ENCODE measurements at regions of chr3 and their contacts with region 1.

Region 1: GRCh38 chr3:187738331-187739093 is 6.8 kb downstream of the BCL6 start:
- DNase-seq: peak; percentile 94
- H3K4me3 Mint-ChIP-seq: peak overlapping the region; percentile 83
- H3K27ac Mint-ChIP-seq: peak overlapping the region; percentile 59
- H3K4me1 Mint-ChIP-seq: peaks cover 42% of the 10 kb centered on the region
- H3K27me3 Mint-ChIP-seq: peaks cover 9% of the 10 kb centered on the region
- CTCF ChIP-seq: peak; percentile 96

Region 2: GRCh38 chr3:186909078-186909853 is 829.2 kb before region 1 on chr3:
- CTCF ChIA-PET with region 1: no interaction called
- intact Hi-C with region 1: no loop called
- DNase-seq: peak; percentile 24
- H3K4me3 Mint-ChIP-seq: no peak overlapping the region
- H3K27ac Mint-ChIP-seq: no peak overlapping the region
- H3K4me1 Mint-ChIP-seq: no peaks in the 10 kb centered on the region
- H3K27me3 Mint-ChIP-seq: peaks cover 60% of the 10 kb centered on the region
- CTCF ChIP-seq: no peak

Region 3: DNA sequence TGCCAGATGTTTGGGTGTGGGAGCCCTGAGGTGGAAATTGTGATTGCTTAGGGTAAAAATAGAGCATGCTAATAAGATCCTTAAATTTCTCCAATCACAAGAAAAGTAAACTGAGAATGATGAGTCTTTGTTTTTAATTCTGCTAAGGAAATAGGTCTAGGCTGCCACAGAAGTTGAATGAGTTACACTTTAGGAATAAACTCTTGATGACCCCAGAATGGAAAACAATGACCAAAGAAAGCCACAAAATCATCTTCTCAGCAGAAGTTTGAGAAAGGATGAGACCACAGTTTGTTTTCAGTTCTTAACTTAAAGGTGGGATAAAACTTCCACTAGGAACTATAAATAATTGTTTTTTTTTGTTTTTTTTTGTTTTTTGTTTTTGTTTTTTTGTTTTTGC is 171.4 kb after region 1 on chr3:
- CTCF ChIA-PET with region 1: no interaction called
- intact Hi-C with region 1: no loop called
- DNase-seq: no peak
- H3K4me3 Mint-ChIP-seq: no peak overlapping the region
- H3K27ac Mint-ChIP-seq: no peak overlapping the region
- H3K4me1 Mint-ChIP-seq: peaks cover 26% of the 10 kb centered on the region
- H3K27me3 Mint-ChIP-seq: no peaks in the 10 kb centered on the region
- CTCF ChIP-seq: no peak

Region 4: GRCh38 chr3:188154014-188154808 is 415.7 kb after region 1 on chr3 and contains the start of gene LPP:
- CTCF ChIA-PET with region 1: interaction called, 6 read pairs
- intact Hi-C with region 1: loop called (anchors 1 kb)
- DNase-seq: peak; percentile 97
- H3K4me3 Mint-ChIP-seq: peak within 1 kb of the TSS; percentile 72
- H3K27ac Mint-ChIP-seq: peak within 1 kb of the TSS; percentile 86
- H3K4me1 Mint-ChIP-seq: peaks cover 56% of the 10 kb centered on the region
- H3K27me3 Mint-ChIP-seq: no peaks in the 10 kb centered on the region
- CTCF ChIP-seq: peak; percentile 21
- total RNA-seq, gene LPP: 219 and 264 TPM in 2 replicates

Region 5: GRCh38 chr3:188270423-188270972 is 532.0 kb after region 1 on chr3:
- CTCF ChIA-PET with region 1: interaction called, 6 read pairs
- intact Hi-C with region 1: loop called (anchors 2 kb)
- DNase-seq: peak; percentile 80
- H3K4me3 Mint-ChIP-seq: peak overlapping the region; percentile 24
- H3K27ac Mint-ChIP-seq: peak overlapping the region; percentile 88
- H3K4me1 Mint-ChIP-seq: peaks cover 55% of the 10 kb centered on the region
- H3K27me3 Mint-ChIP-seq: no peaks in the 10 kb centered on the region
- CTCF ChIP-seq: no peak

Region 6: DNA sequence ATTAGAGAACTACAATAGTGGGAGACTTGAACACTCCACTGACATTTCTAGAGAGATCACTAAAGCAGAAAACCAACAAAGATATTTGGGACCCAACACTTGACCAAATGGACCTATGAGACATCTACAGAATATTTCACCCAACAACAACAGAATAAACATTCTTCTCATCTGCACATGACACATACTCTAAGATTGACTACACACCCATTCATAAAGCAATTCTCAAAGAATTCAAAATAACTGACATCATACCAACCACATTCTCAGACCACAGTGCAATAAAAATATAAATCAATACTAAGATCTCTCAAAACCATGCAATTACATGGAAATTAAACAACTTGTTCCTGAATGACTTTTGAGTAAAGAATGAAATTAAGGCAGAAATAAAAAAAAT is 889.1 kb after region 1 on chr3:
- CTCF ChIA-PET with region 1: interaction called, 3 read pairs
- intact Hi-C with region 1: loop called (anchors 5 kb)
- DNase-seq: no peak
- H3K4me3 Mint-ChIP-seq: no peak overlapping the region
- H3K27ac Mint-ChIP-seq: peak overlapping the region; percentile 12
- H3K4me1 Mint-ChIP-seq: peaks cover 47% of the 10 kb centered on the region
- H3K27me3 Mint-ChIP-seq: no peaks in the 10 kb centered on the region
- CTCF ChIP-seq: no peak

Region 7: GRCh38 chr3:188830893-188831292 is 1092.4 kb after region 1 on chr3:
- CTCF ChIA-PET with region 1: no interaction called
- intact Hi-C with region 1: loop called (anchors 5 kb)
- DNase-seq: peak; percentile 10
- H3K4me3 Mint-ChIP-seq: no peak overlapping the region
- H3K27ac Mint-ChIP-seq: no peak overlapping the region
- H3K4me1 Mint-ChIP-seq: no peaks in the 10 kb centered on the region
- H3K27me3 Mint-ChIP-seq: no peaks in the 10 kb centered on the region
- CTCF ChIP-seq: peak; percentile 40

Region 8: GRCh38 chr3:188954590-188955208 is 1216.2 kb after region 1 on chr3:
- CTCF ChIA-PET with region 1: interaction called, 171 read pairs
- intact Hi-C with region 1: loop called (anchors 1 kb)
- DNase-seq: peak; percentile 94
- H3K4me3 Mint-ChIP-seq: no peak overlapping the region
- H3K27ac Mint-ChIP-seq: no peak overlapping the region
- H3K4me1 Mint-ChIP-seq: peaks cover 24% of the 10 kb centered on the region
- H3K27me3 Mint-ChIP-seq: no peaks in the 10 kb centered on the region
- CTCF ChIP-seq: peak; percentile 98

Region 9: DNA sequence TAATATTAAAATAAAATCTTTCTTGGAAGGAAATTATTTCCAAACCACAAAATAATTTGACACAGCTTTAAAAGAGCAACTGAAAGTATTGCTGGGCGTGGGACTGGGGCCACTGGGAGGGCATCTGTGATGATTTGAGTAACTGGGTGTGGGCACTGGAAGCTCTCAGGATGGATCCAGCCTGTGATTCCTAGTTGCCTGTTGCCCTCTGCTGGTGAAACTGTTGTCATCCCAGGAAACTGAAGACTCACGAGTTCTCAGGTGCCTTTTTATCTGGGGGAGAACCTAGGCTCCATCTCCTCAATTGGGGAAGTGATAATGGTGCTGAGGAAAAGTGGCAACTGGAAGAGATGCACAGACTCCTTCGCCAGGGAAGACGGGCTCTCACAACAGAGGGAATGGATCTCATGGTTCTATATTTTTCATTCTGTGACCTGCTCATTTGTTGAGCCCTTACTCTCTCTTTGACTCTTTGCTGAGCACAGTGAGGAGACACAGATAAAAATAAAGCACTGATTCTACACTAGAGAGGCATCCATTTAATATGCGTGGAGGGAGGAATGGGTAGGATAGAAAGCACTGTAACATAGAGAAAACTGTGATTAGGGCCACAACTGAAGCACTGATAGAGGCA is 1494.8 kb after region 1 on chr3:
- CTCF ChIA-PET with region 1: interaction called, 3 read pairs
- intact Hi-C with region 1: loop called (anchors 2 kb)
- DNase-seq: peak; percentile 84
- H3K4me3 Mint-ChIP-seq: no peak overlapping the region
- H3K27ac Mint-ChIP-seq: no peak overlapping the region
- H3K4me1 Mint-ChIP-seq: peaks cover 35% of the 10 kb centered on the region
- H3K27me3 Mint-ChIP-seq: no peaks in the 10 kb centered on the region
- CTCF ChIP-seq: peak; percentile 83